ENCODE measurements at regions of chr17 and their contacts with region 1.

Region 1: GRCh38 chr17:4934173-4934979 is 2.3 kb downstream of the GP1BA start:
- DNase-seq: no peak
- ATAC-seq: peak; percentile 79
- H3K4me3 ChIP-seq: no peak overlapping the region
- H3K27ac ChIP-seq: no peak overlapping the region
- H3K4me1 ChIP-seq: peaks cover 9 to 22% of the 10 kb centered on the region in 2 experiments
- H3K27me3 ChIP-seq: no peaks in the 10 kb centered on the region
- CTCF ChIP-seq: peak in 2 of 3 experiments; percentile 34 to 41; a peak in 3 of 6 replicates
- POLR2A ChIP-seq: no peak
- RAD21 ChIP-seq: no peak

Region 2: DNA sequence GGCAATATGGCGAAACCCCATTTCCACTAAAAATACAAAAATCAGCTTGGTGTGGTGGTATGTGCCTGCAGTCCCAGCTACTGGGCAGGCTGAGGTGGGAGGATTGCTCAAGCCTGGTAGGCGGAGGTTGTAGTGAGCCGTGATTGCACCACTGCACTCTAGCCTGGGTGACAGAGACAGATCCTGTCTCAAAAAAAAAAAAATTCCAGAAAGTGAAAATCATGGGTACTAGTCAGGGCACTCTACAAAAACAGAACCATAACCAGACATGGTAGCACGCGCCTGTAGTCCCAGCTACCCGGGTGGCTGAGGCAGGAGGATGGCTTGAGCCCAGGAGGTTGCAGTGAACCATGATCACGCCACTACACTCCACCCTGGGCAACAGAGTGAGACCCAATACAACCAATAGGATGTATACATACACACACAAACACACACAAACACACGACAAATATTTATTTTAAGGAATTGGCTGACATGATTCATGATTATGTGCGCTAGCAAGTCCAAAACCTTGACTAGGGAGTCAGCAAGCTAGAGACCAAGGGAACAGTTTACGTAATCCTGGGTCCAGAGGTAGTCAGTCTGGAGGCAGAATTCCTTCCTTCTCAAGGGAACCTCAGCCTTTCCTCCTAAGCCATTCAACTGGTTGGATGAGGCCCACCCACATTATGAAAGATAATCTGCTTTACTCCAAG is 13.9 kb before region 1 on chr17:
- CTCF ChIA-PET with region 1: no interaction called
- POLR2A ChIA-PET with region 1: interaction called, 3 read pairs
- RAD21 ChIA-PET with region 1: no interaction called
- intact Hi-C with region 1: loop called (anchors 2 kb)
- DNase-seq: no peak
- ATAC-seq: no peak
- H3K4me3 ChIP-seq: no peak overlapping the region
- H3K27ac ChIP-seq: no peak overlapping the region
- H3K4me1 ChIP-seq: no peaks in the 10 kb centered on the region
- H3K27me3 ChIP-seq: no peaks in the 10 kb centered on the region
- CTCF ChIP-seq: no peak
- POLR2A ChIP-seq: no peak
- RAD21 ChIP-seq: no peak